Activated B cell treated with CpG ODN at 0.5 μM for 24 hours (primary cell): ENCODE measurements at regions of chr7 and their contacts with region 1.

Region 1: GRCh38 chr7:130896898-130897514 is 163.0 kb upstream of the KLF14 start:
- DNase-seq: peak; percentile 54
- ATAC-seq: peak; percentile 64
- H3K4me3 Mint-ChIP-seq: peak overlapping the region; percentile 59
- H3K27ac Mint-ChIP-seq: peak overlapping the region; percentile 84
- H3K4me1 Mint-ChIP-seq: peaks cover 85% of the 10 kb centered on the region
- H3K27me3 Mint-ChIP-seq: no peaks in the 10 kb centered on the region
- CTCF ChIP-seq: peak; percentile 51

Region 2: DNA sequence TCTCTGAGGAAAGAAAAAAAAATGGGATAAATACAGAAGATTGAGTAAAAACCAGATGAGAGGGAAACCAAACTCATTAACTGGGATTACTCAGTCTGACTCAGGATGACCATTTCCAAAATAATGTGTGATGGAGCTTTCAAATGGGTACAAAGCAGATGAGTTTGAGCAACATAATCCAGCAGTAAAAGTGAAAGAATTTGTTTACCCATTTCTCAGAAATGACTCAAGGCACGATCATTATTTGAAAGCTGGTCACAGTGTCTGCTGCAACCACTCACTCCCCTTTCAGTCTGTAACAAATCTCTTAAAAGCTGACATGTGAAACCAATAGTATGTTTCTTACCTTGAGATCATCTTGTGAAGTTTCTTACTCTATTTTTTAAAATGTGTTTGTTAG is 58.3 kb before region 1 on chr7:
- CTCF ChIA-PET with region 1: no interaction called
- POLR2A ChIA-PET with region 1: no interaction called
- intact Hi-C with region 1: no loop called
- DNase-seq: no peak
- ATAC-seq: no peak
- H3K4me3 Mint-ChIP-seq: no peak overlapping the region
- H3K27ac Mint-ChIP-seq: no peak overlapping the region
- H3K4me1 Mint-ChIP-seq: peaks cover 19% of the 10 kb centered on the region
- H3K27me3 Mint-ChIP-seq: peaks cover 6% of the 10 kb centered on the region
- CTCF ChIP-seq: no peak

Region 3: DNA sequence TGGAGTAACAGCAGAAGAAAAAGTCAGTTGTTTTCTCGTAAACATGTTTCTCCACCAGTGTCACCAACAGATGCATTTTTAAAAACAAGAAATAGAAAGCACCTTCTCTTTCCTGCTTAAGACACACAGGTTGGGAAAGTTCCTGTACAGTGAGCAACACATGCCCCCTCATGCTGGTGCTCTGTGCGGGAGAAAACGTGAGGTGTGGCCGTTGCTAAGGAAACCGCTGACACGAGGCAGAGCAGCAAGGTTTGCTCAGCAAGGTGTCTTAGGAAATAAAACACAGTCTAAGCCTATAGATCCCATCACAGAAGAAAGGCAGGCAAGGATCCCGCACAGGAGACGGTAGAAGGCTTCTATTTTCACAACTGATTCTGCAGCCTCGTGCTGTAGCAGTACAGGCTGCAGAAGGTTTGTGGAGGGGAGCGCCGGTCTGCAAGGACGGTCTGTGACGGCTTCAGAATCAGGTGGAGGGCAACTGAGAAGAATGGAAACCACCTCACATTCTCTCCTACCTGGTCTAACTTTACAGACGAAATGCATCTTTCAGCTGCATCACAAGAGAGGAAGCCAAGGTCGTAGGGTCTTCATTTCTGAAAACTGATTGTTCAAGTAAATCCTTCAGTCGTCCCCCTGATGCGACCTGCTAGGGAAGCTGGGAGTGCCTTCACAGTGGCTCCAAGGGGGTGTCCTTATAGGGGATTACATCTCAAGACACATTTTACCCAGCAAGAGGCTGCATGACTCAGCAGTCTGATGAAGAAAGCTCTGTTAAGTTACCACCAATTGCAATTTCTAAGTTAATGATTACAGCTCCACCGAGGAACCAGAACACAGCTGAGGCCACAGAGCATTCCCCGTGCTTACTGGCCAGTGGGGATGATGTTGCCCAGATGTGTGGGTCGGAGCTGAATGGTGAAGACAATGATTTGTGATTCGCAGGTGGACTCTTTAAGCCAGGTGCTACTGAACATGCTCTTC is 12.3 kb before region 1 on chr7:
- CTCF ChIA-PET with region 1: interaction called, 14 read pairs
- POLR2A ChIA-PET with region 1: no interaction called
- intact Hi-C with region 1: no loop called
- DNase-seq: no peak
- ATAC-seq: no peak
- H3K4me3 Mint-ChIP-seq: no peak overlapping the region
- H3K27ac Mint-ChIP-seq: peak overlapping the region; percentile 38
- H3K4me1 Mint-ChIP-seq: peaks cover 3% of the 10 kb centered on the region
- H3K27me3 Mint-ChIP-seq: no peaks in the 10 kb centered on the region
- CTCF ChIP-seq: no peak

Region 4: GRCh38 chr7:130941322-130942210 is 44.6 kb after region 1 on chr7:
- CTCF ChIA-PET with region 1: interaction called, 15 read pairs
- POLR2A ChIA-PET with region 1: no interaction called
- intact Hi-C with region 1: loop called (anchors 2 kb)
- DNase-seq: no peak
- ATAC-seq: no peak
- H3K4me3 Mint-ChIP-seq: peak overlapping the region; percentile 78
- H3K27ac Mint-ChIP-seq: peak overlapping the region; percentile 84
- H3K4me1 Mint-ChIP-seq: peaks cover 90% of the 10 kb centered on the region
- H3K27me3 Mint-ChIP-seq: no peaks in the 10 kb centered on the region
- CTCF ChIP-seq: no peak

Region 5: DNA sequence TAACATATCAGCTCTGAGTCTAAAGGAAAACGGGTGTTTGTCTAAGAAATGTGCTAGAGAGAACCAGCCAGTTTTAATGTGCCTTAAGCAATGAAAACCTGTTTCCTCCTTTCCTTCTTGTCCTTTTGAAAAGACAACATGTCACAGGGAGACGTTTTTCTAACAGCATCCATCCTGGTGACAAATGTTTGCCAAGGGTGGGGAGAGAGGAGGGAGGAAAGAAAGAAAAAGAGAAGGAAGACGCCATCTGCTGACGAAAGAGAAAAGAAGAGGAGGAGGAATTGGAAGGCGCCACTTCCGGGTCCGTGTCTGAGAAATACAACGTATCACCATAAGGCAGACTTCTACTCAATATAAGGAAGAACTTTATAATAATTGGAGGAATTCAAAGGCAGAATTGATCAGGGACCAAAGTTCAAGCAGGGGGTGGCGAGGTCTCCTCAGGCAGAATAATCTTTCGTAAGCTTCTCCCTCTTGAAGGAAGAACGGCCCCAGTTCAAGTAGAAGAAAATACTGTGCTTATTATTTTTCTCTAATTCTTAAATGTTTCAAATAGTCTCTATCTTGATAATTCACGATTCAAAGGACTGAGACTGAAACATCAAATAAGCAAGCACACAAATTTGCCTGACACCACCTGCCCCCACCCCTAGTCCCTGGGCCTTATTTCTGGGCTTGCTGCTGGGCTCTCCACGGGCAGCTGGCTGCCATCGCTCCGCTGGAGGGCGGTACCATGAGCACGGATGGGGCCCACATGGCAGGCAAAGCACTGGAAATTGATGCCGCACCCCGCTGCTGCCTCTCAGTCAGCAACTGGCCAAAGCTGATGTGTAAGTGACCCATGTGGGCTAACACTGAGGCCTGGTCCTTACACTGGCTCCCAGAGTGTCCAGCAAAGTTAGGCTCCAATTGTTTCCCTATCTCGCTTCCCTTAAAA is 110.7 kb after region 1 on chr7:
- CTCF ChIA-PET with region 1: interaction called, 18 read pairs
- POLR2A ChIA-PET with region 1: no interaction called
- intact Hi-C with region 1: loop called (anchors 1 kb)
- DNase-seq: no peak
- ATAC-seq: peak; percentile 64
- H3K4me3 Mint-ChIP-seq: peak overlapping the region; percentile 46
- H3K27ac Mint-ChIP-seq: peak overlapping the region; percentile 89
- H3K4me1 Mint-ChIP-seq: peaks cover 88% of the 10 kb centered on the region
- H3K27me3 Mint-ChIP-seq: no peaks in the 10 kb centered on the region
- CTCF ChIP-seq: no peak

Region 6: GRCh38 chr7:131046246-131046645 is 149.2 kb after region 1 on chr7:
- CTCF ChIA-PET with region 1: interaction called, 111 read pairs
- POLR2A ChIA-PET with region 1: no interaction called
- intact Hi-C with region 1: no loop called
- DNase-seq: no peak
- ATAC-seq: no peak
- H3K4me3 Mint-ChIP-seq: no peak overlapping the region
- H3K27ac Mint-ChIP-seq: peak overlapping the region; percentile 47
- H3K4me1 Mint-ChIP-seq: peaks cover 57% of the 10 kb centered on the region
- H3K27me3 Mint-ChIP-seq: no peaks in the 10 kb centered on the region
- CTCF ChIP-seq: no peak

Region 7: GRCh38 chr7:131424219-131424822 is 527.3 kb after region 1 on chr7:
- CTCF ChIA-PET with region 1: interaction called, 8 read pairs
- POLR2A ChIA-PET with region 1: no interaction called
- intact Hi-C with region 1: loop called (anchors 2 kb)
- DNase-seq: no peak
- ATAC-seq: peak; percentile 81
- H3K4me3 Mint-ChIP-seq: no peak overlapping the region
- H3K27ac Mint-ChIP-seq: no peak overlapping the region
- H3K4me1 Mint-ChIP-seq: peaks cover 2% of the 10 kb centered on the region
- H3K27me3 Mint-ChIP-seq: no peaks in the 10 kb centered on the region
- CTCF ChIP-seq: no peak